Activated naive CD4-positive, alpha-beta T cell treated with anti-CD3 and anti-CD28 coated beads for 36 hours (primary cell): ENCODE measurements at regions of chr3 and their contacts with region 1.

Region 1: GRCh38 chr3:170572665-170573253 is 13.1 kb downstream of the SLC7A14 start:
- DNase-seq: peak; percentile 48
- H3K4me3 Mint-ChIP-seq: no peak overlapping the region
- H3K27ac Mint-ChIP-seq: no peak overlapping the region
- H3K4me1 Mint-ChIP-seq: peaks cover 11% of the 10 kb centered on the region
- H3K27me3 Mint-ChIP-seq: peaks cover 29% of the 10 kb centered on the region

Region 2: DNA sequence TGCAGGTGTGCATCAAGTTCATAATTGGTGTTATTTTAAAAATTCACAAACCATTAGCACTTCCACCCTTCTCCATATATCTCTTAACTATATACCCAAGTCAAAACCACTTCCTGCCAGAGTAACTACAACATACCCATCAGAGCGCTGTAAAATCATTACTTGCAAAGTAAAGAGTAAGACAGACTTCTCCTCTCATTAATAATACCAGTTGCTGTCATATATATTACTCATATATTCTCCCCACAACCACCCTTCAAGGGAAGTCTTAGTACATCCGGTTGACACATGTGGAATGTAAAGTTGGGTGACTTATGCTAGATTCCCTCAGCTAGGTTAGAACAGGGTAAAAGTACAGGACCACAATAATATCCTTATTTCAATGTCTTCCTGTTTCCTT is 813.5 kb before region 1 on chr3:
- CTCF ChIA-PET with region 1: no interaction called
- intact Hi-C with region 1: loop called (anchors 2 kb)
- DNase-seq: peak; percentile 24
- H3K4me3 Mint-ChIP-seq: no peak overlapping the region
- H3K27ac Mint-ChIP-seq: peak overlapping the region; percentile 62
- H3K4me1 Mint-ChIP-seq: peaks cover 25% of the 10 kb centered on the region
- H3K27me3 Mint-ChIP-seq: no peaks in the 10 kb centered on the region

Region 3: DNA sequence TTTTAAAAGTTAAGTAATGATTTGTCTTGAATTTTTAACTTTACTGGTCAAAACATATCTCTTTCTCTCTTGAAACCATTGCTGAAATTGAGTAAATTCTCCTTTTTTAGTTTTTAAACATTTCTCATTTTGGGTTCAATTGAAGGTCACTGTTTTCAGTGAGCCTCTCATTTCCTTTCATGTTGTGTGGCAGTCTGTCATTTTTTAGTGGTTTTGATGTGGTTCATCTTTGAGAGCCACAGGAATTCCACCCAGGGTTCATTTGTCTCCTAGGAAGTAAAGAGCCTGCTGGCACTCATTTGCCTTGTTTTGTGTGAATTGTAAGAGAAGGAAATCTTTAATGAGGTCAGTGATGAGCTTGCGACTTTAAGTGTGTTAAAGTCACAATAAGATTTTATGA is 143.7 kb before region 1 on chr3:
- CTCF ChIA-PET with region 1: no interaction called
- intact Hi-C with region 1: loop called (anchors 2 kb)
- DNase-seq: no peak
- H3K4me3 Mint-ChIP-seq: no peak overlapping the region
- H3K27ac Mint-ChIP-seq: no peak overlapping the region
- H3K4me1 Mint-ChIP-seq: peaks cover 18% of the 10 kb centered on the region
- H3K27me3 Mint-ChIP-seq: peaks cover 2% of the 10 kb centered on the region

Region 4: GRCh38 chr3:170689893-170690660 is 117.3 kb after region 1 on chr3:
- CTCF ChIA-PET with region 1: no interaction called
- intact Hi-C with region 1: loop called (anchors 5 kb)
- DNase-seq: peak; percentile 59
- H3K4me3 Mint-ChIP-seq: no peak overlapping the region
- H3K27ac Mint-ChIP-seq: no peak overlapping the region
- H3K4me1 Mint-ChIP-seq: peaks cover 3% of the 10 kb centered on the region
- H3K27me3 Mint-ChIP-seq: no peaks in the 10 kb centered on the region